ENCODE measurements at regions of chr3 and their contacts with region 1.

Region 1: DNA sequence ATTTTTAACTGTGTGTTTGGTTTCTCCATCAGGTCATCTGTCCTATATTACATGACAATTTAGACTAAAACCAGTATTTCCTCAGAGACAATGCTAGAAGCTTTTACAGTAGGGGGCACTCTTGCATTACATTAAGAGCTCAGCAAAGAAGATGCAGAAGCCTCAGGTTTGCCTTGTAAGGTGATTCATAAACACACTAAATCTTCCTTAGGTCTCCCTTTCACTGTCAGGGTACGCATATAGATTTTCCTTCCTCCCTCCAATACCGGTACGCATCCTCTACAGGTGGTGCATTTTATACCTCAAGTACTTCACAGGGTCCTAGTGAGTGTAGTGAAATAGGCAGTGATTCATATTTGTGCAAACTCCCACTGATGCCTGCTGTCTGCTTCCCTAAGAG is 46.5 kb downstream of the CD86 start:
- DNase-seq: no peak
- CTCF ChIP-seq: peak; percentile 73

Region 2: DNA sequence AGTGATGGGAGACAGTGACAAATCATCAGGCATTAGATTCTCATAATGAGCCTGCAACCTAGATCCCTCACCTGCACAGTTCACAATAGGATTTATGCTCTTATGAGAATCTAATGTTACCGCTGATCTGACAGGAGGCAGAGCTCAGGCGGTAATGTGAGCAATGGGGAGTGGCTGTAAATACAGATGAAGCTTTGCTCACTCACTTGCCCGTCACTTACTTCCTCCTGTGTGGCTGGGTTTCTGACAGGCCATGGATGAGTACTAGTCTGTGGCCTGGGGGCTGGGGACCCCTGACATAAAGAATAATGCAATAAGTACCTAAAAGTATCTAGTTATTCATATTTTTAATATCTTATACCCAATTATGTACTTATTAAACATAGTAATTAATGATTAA is 282.4 kb before region 1 on chr3:
- CTCF ChIA-PET with region 1: no interaction called
- POLR2A ChIA-PET with region 1: no interaction called
- DNase-seq: no peak
- CTCF ChIP-seq: no peak

Region 3: GRCh38 chr3:121995161-121996137 is 106.2 kb before region 1 on chr3:
- CTCF ChIA-PET with region 1: interaction called, 17 read pairs
- POLR2A ChIA-PET with region 1: no interaction called
- DNase-seq: peak; percentile 51
- CTCF ChIP-seq: peak; percentile 53

Region 4: GRCh38 chr3:122081543-122082247 is 20.0 kb before region 1 on chr3:
- CTCF ChIA-PET with region 1: interaction called, 92 read pairs
- POLR2A ChIA-PET with region 1: no interaction called
- DNase-seq: no peak
- CTCF ChIP-seq: no peak

Region 5: GRCh38 chr3:122146466-122146865 is 44.8 kb after region 1 on chr3:
- CTCF ChIA-PET with region 1: interaction called, 16 read pairs
- POLR2A ChIA-PET with region 1: no interaction called
- DNase-seq: peak; percentile 58
- CTCF ChIP-seq: no peak

Region 6: DNA sequence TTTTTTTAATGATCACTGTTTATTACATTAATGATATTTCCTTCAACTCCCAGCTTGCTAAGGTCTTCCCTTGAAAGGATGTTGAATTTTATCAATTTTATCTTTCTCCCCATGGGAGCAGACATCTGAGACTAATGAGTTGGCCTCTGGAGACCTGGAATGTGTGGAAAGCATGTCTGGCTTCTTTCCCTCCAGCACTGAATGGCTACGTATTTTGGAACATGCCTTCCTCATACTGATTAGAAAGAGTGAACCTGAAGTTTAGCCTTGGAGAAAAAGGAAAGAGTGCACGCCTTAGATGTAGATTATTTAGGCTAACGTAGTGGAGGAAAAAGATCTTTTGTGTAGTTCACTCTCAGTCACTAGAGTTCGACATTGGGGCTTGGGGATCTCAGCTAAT is 106.9 kb after region 1 on chr3:
- CTCF ChIA-PET with region 1: no interaction called
- POLR2A ChIA-PET with region 1: no interaction called
- DNase-seq: no peak
- CTCF ChIP-seq: no peak

Region 7: DNA sequence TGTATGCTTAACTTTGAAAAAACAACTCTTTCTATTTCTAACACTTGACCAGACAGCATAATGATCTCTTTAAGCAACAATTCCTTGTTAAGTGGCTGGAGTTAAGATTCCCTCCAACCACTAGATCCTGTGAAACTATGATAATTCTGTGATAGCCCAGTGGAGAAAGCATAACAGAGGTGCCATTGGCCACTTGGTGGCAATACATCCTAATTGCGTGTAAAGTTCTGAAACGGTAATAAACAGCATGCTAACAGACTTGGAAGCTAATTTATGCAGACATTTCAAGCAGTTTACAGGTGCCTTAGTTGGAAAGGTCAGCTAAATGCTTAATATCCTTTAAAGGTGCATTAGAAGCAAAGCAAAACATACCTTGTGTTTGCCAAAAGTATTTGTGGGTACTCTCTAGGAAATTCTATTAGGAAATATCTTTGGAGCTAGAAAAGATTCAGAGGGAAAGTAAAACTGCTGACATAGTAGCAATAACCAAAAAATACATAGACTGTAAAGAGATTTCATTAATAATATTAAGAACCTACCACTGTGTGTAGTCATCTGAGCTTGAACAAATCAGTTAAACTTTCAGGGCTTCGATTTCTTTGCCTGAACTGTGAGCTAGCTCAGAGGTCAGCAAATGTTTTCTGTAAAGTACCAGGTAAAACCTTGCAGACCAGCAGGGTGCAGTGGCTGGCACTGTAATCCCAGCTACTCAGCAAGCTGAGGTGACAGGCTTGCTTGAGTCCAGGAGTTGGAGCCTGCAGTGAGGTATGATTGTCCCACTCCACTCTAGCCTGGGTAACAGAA is 204.4 kb after region 1 on chr3:
- CTCF ChIA-PET with region 1: interaction called, 34 read pairs
- POLR2A ChIA-PET with region 1: no interaction called
- DNase-seq: no peak
- CTCF ChIP-seq: peak; percentile 36

Region 8: DNA sequence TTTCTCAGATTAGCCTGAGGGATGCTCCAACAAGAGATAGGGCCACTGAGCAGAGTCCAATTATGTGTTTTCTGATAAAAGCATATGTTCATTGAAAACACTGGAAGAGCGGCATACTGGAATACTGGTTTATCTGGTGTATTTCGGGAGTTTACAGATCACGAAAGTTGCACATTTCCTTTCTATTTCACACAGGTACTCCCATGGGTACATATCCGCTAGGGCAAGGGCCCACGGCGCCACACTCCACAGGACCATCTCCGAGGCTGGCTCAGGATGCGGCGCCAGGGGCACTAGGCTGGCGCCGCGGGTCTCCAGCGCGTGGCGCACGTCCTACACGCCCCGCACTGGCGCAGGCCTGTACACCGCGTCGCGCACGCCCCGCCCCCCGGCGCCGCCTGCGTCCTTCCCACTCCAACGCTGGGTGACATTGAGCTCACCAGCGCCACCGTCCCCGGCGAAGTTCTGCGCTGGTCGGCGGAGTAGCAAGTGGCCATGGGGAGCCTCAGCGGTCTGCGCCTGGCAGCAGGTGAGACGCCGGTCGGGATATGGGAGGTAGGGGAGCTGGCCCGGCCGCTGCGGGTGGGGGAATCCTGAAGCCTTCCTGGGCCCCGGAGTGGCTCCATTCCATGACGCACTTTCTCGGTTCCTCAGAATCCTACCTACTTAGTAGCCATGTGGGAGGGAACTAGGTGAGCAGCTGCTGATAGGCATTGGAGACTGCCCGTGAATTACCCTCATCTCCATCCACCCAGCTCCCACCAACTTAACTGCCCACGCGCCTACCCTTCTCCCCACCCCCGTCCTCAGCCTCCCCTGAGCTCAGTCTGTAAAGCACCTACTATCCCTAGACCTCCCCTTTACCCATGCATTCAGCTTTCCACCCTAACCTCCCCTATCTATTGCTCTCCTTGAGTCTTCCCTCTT is 282.4 kb after region 1 on chr3 and contains the start of gene FAM162A:
- CTCF ChIA-PET with region 1: interaction called, 12 read pairs
- POLR2A ChIA-PET with region 1: interaction called, 3 read pairs
- DNase-seq: peak; percentile 93
- CTCF ChIP-seq: peak; percentile 84